Endothelial cell of umbilical vein (primary cell): ENCODE measurements at regions of chr20 and their contacts with region 1.

Region 1: GRCh38 chr20:45812157-45813020 is at the start of gene UBE2C:
- DNase-seq: peak; percentile 100
- H3K4me3 ChIP-seq: peak within 1 kb of the TSS; percentile 59 to 96 (median 90)
- H3K27ac ChIP-seq: peak within 1 kb of the TSS; percentile 41
- H3K4me1 ChIP-seq: peaks cover 16% of the 10 kb centered on the region
- H3K27me3 ChIP-seq: no peaks in the 10 kb centered on the region
- CTCF ChIP-seq: no peak
- POLR2A ChIP-seq: peak; percentile 50
- total RNA-seq, gene UBE2C: 108 and 129 TPM in 2 replicates

Region 2: GRCh38 chr20:45752746-45753145 is 59.6 kb before region 1 on chr20:
- CTCF ChIA-PET with region 1: no interaction called
- POLR2A ChIA-PET with region 1: no interaction called
- dilution Hi-C with region 1: no loop called
- intact Hi-C with region 1: no loop called
- DNase-seq: no peak
- H3K4me3 ChIP-seq: no peak overlapping the region
- H3K27ac ChIP-seq: no peak overlapping the region
- H3K4me1 ChIP-seq: no peaks in the 10 kb centered on the region
- H3K27me3 ChIP-seq: peaks cover 5 to 7% of the 10 kb centered on the region in 2 experiments
- CTCF ChIP-seq: no peak
- POLR2A ChIP-seq: no peak

Region 3: DNA sequence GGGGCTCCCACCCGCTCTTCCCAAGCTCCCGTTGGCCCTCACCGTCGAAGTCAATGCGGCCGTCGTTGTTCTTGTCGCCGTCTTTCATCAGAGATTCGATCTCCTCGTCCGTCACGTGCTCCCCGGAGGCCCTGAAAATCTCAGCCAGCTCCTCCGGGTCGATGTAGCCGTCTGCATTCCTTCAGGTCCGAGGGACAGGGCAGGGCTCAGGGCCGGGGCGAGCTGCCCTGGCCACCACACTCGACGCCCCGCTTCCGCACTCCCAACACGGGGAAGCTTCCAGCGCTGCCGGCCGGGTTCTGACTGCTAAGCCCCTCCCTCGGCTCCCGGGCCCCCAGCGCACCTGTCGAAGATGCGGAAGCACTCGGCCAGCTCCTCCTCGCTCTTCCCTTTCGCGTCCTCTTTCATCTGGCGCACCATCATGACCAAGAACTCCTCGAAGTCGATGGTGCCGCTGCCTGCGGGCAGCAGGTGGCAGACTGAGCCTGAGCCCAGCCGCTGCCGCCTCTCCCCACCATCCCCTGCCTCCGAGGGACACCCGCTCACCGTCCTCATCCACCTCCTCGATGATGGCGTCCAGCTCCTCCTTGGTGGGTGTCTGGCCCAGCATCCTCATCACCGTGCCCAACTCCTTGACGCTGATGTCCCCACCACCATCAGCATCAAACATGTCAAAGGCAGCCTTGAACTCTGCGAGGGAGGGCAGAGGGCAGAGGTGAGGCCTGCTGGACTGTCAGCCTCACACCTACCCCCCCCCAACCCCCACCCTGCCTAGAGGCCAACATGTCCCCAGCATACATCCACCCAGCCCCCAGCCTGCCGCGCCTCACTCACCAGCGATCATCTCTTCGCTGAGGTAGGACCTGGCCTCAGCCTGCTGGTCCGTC is 11.8 kb after region 1 on chr20:
- CTCF ChIA-PET with region 1: interaction called, 12 read pairs
- POLR2A ChIA-PET with region 1: no interaction called
- dilution Hi-C with region 1: no loop called
- intact Hi-C with region 1: no loop called
- DNase-seq: peak; percentile 46
- H3K4me3 ChIP-seq: peak overlapping the region in 1 of 3 experiments; percentile 17
- H3K27ac ChIP-seq: no peak overlapping the region
- H3K4me1 ChIP-seq: peaks cover 4% of the 10 kb centered on the region
- H3K27me3 ChIP-seq: peaks cover 11 to 16% of the 10 kb centered on the region in 2 experiments
- CTCF ChIP-seq: peak; percentile 40 to 75
- POLR2A ChIP-seq: no peak

Region 4: DNA sequence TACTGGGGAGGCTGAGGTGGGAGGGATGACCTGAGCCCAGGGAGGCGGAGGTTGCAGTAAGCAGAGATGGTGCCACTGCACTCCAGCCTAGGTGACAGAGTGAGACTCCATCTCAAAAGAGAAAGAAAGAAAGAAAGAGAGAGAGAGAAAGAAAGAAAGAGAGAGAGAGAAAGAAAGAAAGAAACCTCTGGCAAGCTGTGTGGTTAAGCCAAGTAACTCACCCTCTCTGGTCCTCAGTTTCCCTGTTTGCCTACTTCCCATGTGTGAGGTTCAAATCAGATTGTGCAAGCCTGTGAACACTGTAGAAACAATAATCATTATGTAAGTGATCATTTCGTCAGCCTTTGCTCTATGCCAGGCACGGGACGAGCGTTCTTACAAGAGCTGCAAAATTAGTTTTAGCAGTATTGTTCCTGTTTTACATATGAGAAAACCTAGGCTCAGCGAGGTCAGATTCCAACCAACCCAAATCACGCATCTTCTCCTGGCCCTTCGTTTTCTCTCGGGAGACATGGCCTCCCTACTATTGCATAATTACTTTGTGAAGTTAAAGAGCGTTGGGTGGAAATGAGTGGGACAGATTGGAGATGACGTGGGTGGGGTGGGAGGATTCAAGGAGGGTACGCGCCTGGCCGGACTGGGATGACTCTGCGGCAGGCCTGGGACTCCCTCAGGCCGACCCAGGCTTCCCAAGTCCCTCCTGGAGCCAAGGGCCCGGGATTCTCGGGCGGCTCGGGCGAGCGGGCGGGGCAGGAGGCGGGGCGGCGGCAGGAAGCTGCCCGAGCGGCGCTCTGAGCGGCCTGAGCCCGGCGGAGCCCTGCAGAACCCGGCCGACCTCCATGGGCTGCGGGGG is 20.9 kb after region 1 on chr20 and contains the start of gene SNX21:
- CTCF ChIA-PET with region 1: no interaction called
- POLR2A ChIA-PET with region 1: no interaction called
- dilution Hi-C with region 1: no loop called
- intact Hi-C with region 1: loop called (anchors 1 kb)
- DNase-seq: peak; percentile 78
- H3K4me3 ChIP-seq: peak within 1 kb of the TSS; percentile 35 to 64 (median 47)
- H3K27ac ChIP-seq: peak within 1 kb of the TSS; percentile 71
- H3K4me1 ChIP-seq: peaks cover 20% of the 10 kb centered on the region
- H3K27me3 ChIP-seq: no peaks in the 10 kb centered on the region
- CTCF ChIP-seq: no peak
- POLR2A ChIP-seq: no peak
- total RNA-seq, gene SNX21: 11.9 and 14.9 TPM in 2 replicates

Region 5: GRCh38 chr20:45857114-45857881 is 44.9 kb after region 1 on chr20 and contains the starts of genes ACOT8 and ZSWIM3:
- CTCF ChIA-PET with region 1: no interaction called
- POLR2A ChIA-PET with region 1: interaction called, 5 read pairs
- dilution Hi-C with region 1: no loop called
- intact Hi-C with region 1: loop called (anchors 1 kb)
- DNase-seq: peak; percentile 99
- H3K4me3 ChIP-seq: peak within 1 kb of the TSS; percentile 32 to 78 (median 66)
- H3K27ac ChIP-seq: peak within 1 kb of the TSS; percentile 51
- H3K4me1 ChIP-seq: peaks cover 12% of the 10 kb centered on the region
- H3K27me3 ChIP-seq: no peaks in the 10 kb centered on the region
- CTCF ChIP-seq: no peak
- POLR2A ChIP-seq: peak; percentile 91
- total RNA-seq, gene ACOT8: 15.5 and 15.8 TPM in 2 replicates
- total RNA-seq, gene ZSWIM3: 4.2 and 4.4 TPM in 2 replicates

Region 6: DNA sequence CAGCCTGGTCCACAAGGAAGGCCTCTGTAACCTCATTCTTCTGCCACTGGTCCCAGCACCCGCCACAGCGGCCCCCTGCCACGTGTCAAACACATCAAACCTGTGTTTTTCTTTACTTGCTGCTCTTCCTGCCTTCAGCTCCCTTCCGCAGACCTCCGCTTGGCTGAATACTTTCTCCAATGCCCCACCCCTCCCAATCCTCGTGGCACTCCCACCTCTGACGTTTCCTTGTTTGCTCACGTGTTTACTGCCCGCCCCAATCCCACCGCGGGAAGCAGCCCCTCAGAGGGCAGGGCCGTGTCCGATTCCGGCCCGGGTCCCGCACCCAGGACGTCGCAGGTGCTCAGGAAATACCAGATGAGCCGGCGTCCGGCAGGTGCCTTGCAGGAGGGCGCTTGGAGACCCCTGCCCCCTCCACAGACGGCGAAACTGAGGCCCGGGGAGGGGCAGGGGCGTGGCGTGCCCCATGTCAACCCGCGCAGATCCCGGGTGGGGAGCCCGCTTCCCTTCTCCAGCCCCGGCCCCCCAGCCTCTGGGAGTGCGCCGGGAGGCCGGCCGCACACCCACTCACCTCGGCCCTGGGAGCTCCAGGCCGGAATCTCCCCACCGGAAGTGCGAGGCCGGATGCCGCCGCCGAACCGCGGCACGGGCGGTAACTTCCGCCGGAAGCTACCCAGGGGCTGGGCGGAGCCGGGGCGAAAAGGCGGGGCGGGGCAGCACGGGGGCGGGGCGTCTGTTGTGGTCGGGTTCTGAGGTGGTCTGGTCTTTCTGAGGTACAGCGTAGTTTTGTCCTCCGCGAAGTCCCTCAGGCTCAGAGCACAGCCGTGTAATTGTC is 551.6 kb after region 1 on chr20:
- CTCF ChIA-PET with region 1: no interaction called
- POLR2A ChIA-PET with region 1: no interaction called
- dilution Hi-C with region 1: no loop called
- intact Hi-C with region 1: loop called (anchors 10 kb)
- DNase-seq: peak; percentile 88
- H3K4me3 ChIP-seq: peak overlapping the region; percentile 49 to 90 (median 67)
- H3K27ac ChIP-seq: peak overlapping the region; percentile 94
- H3K4me1 ChIP-seq: peaks cover 8% of the 10 kb centered on the region
- H3K27me3 ChIP-seq: no peaks in the 10 kb centered on the region
- CTCF ChIP-seq: no peak
- POLR2A ChIP-seq: peak; percentile 68